ENCODE measurements at regions of chr11 and their contacts with region 1.

Region 1: DNA sequence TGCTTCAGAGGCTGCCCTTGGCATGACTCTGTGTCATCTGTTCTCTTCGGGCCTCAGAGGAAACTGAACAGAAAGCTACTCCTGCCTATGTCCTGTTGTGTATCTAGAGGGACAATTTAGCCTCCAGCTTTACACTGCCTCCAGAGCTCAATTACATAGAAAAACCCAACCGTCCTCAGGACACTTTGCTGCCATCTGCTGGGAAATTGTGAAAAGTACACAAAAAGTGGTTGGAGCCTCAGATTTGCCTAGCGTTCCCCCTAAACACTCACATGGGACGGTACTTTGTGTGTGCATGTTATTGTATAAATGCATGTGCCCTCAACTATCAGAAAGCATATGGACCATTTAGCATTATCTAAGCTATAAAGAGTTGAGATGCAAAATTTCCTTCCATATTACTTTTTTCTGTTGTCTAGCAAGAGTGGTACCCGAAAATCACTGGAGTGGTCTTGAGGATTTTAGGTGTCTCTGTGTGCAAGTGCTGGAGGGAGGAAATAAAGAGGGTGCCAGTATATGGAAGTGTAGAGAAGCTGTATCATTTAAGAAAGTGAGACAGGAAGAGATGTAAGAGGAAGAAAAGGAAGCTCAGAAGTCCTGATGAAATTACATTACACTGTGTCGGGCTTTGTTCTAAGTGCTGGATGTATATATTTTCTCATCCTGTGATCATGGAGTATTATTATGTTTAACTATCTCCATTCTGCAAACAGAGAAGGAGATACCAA is 8.7 kb upstream of the MS4A4E start:
- DNase-seq: no peak
- CTCF ChIP-seq: peak; percentile 33

Region 2: GRCh38 chr11:59753650-59754493 is 497.8 kb before region 1 on chr11:
- CTCF ChIA-PET with region 1: interaction called, 10 read pairs
- POLR2A ChIA-PET with region 1: no interaction called
- DNase-seq: peak; percentile 90
- CTCF ChIP-seq: peak; percentile 80

Region 3: DNA sequence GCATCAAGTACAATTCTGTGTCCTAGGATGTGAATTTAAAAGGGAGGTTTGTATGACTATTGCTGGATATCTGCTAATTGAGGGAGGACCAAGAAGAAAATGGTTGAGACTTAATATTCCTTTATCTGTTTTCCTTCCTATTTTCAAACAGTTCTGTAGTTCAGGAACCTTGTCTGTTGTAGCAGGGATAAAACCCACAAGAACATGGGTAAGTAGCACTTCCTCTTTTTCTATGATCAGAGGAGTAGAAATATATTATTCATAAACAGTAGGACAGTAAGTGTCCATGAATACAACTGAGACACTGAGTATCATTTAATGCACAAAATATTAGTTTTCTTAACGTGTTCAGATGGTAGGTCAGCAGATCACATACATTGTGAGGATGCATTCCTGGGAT is 187.5 kb before region 1 on chr11:
- CTCF ChIA-PET with region 1: no interaction called
- POLR2A ChIA-PET with region 1: no interaction called
- DNase-seq: peak; percentile 14
- CTCF ChIP-seq: no peak

Region 4: GRCh38 chr11:60118338-60118737 is 133.3 kb before region 1 on chr11:
- CTCF ChIA-PET with region 1: interaction called, 15 read pairs
- POLR2A ChIA-PET with region 1: no interaction called
- DNase-seq: peak; percentile 15
- CTCF ChIP-seq: no peak

Region 5: DNA sequence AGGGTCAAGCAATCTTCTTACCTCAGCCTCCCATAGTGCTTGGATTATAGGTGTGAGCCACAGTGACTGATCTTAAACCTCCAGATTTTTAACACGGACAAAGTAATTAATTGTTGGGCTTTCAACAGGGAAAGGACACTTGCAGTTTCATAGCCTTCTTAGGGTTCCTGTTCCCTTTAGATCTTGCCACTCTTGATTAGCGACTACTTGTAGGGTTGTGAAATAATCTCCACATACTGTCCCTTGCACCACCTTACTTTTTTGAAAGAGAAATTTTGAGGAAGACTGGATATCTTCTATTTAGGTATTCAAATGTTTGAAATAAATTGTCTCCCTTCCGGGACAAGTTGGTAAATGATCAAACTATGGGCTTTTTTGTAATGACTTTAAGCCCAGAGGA is 16.3 kb before region 1 on chr11:
- CTCF ChIA-PET with region 1: interaction called, 18 read pairs
- POLR2A ChIA-PET with region 1: no interaction called
- DNase-seq: no peak
- CTCF ChIP-seq: no peak

Region 6: DNA sequence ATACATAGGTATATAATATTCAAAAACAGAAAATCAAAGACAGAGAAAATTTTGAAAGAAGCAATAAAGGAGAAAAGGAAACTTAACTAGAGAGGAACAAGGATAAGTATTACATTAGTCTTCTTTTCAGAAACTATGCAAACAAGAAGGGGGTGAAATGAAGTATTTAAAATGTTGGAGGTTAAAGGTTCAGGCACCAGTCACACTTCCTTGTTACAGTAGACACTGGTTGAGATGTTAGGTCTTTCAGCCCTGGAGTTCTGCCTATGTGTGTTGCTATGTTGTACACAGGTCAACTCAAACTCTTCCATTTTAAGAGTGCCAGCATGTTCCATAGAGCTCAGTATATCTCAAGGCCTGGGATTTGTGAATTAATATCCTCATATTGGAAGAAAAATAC is 22.8 kb after region 1 on chr11:
- CTCF ChIA-PET with region 1: interaction called, 12 read pairs
- POLR2A ChIA-PET with region 1: no interaction called
- DNase-seq: no peak
- CTCF ChIP-seq: no peak